Activated B cell treated with CpG ODN at 0.5 μM for 24 hours (primary cell): ENCODE measurements at regions of chr16 and their contacts with region 1.

Region 1: GRCh38 chr16:25014500-25015147 is 545 bp downstream of the ARHGAP17 start:
- DNase-seq: peak; percentile 35
- ATAC-seq: peak; percentile 14
- H3K4me3 Mint-ChIP-seq: peak overlapping the region; percentile 92
- H3K27ac Mint-ChIP-seq: peak overlapping the region; percentile 85
- H3K4me1 Mint-ChIP-seq: peaks cover 86% of the 10 kb centered on the region
- H3K27me3 Mint-ChIP-seq: no peaks in the 10 kb centered on the region
- CTCF ChIP-seq: no peak

Region 2: DNA sequence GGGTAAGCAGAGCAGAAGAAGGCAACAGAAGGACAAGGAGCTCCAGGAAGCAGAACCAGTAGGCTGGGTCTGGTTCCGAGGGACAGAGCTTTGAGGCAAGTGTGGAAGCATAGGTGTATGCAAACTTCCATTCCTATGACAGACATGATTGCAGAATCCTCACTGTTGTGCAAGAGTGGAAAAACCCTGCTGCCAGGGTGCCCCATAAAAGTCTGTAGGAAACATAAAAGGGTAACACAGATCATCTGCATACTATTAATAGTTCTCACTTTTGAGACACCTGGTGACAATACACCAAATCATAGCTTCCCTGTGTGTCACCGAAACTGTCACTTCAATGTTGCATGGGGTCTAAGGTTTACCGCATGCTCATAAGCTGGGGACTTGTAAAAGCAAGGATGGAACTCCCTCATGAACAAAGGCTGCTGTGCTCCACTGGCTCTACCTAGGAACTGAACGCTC is 39.2 kb before region 1 on chr16:
- CTCF ChIA-PET with region 1: interaction called, 4 read pairs
- POLR2A ChIA-PET with region 1: interaction called, 21 read pairs
- intact Hi-C with region 1: loop called (anchors 1 kb)
- DNase-seq: no peak
- ATAC-seq: peak; percentile 62
- H3K4me3 Mint-ChIP-seq: peak overlapping the region; percentile 12
- H3K27ac Mint-ChIP-seq: peak overlapping the region; percentile 96
- H3K4me1 Mint-ChIP-seq: peaks cover 83% of the 10 kb centered on the region
- H3K27me3 Mint-ChIP-seq: no peaks in the 10 kb centered on the region
- CTCF ChIP-seq: no peak

Region 3: GRCh38 chr16:25031441-25032307 is 17.1 kb after region 1 on chr16:
- CTCF ChIA-PET with region 1: interaction called, 3 read pairs
- POLR2A ChIA-PET with region 1: interaction called, 72 read pairs
- intact Hi-C with region 1: loop called (anchors 1 kb)
- DNase-seq: peak; percentile 69
- ATAC-seq: peak; percentile 95
- H3K4me3 Mint-ChIP-seq: peak overlapping the region; percentile 95
- H3K27ac Mint-ChIP-seq: peak overlapping the region; percentile 90
- H3K4me1 Mint-ChIP-seq: peaks cover 50% of the 10 kb centered on the region
- H3K27me3 Mint-ChIP-seq: no peaks in the 10 kb centered on the region
- CTCF ChIP-seq: no peak

Region 4: DNA sequence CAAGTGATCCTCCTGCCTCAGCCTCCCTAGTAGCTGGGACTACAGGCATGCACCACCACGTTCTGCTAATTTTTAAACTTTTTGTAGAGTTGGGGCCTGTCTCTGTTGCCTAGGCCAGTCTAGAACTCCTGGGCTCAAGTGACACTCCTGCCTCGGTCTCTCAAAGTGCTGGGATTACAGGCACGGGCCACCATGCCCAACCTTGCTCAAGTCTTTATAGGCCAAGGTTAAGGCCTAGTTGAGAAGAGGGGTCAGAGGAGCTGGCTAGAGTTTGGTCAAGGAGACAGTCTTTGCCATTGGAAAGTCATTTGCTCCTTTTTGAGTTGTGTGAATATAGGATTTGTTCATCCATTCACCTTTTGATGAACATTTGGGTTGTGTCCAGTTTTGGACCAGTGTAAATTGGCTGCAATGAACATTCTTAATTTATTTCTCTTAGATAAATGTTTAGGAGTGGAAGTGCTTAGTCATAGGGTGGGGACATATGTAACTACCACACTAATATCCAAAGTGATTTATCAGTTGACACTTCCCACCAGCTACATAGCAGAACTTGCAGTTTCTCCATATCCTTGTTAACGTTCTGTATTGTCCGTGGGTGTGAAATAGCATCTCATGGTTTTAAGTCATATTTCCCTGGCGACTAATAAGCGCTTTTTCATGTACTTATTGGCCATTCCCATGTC is 31.2 kb after region 1 on chr16:
- CTCF ChIA-PET with region 1: interaction called, 4 read pairs
- POLR2A ChIA-PET with region 1: interaction called, 80 read pairs
- intact Hi-C with region 1: loop called (anchors 1 kb)
- DNase-seq: no peak
- ATAC-seq: no peak
- H3K4me3 Mint-ChIP-seq: no peak overlapping the region
- H3K27ac Mint-ChIP-seq: no peak overlapping the region
- H3K4me1 Mint-ChIP-seq: peaks cover 62% of the 10 kb centered on the region
- H3K27me3 Mint-ChIP-seq: no peaks in the 10 kb centered on the region
- CTCF ChIP-seq: no peak

Region 5: DNA sequence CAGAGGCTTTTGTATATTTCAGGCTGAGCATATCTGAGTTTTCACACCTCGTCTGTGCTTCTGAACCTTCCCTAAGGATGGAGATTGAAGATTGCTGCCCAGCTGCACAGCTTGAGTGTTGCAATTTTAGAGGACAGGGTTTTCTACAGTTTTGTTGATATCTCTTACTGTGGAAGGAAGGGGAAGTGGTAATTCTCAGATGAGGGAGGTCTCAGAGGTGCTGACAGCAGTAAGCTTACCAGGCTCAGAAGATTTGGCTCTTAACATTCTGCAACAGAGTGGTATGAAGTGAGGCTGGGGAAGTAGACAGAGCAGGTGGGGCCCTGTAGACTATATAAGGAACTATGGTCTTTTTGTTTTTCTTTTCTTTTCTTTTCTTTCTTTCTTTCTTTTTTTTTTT is 46.3 kb after region 1 on chr16:
- CTCF ChIA-PET with region 1: interaction called, 5 read pairs
- POLR2A ChIA-PET with region 1: interaction called, 12 read pairs
- intact Hi-C with region 1: no loop called
- DNase-seq: no peak
- ATAC-seq: peak; percentile 95
- H3K4me3 Mint-ChIP-seq: peak overlapping the region; percentile 41
- H3K27ac Mint-ChIP-seq: peak overlapping the region; percentile 92
- H3K4me1 Mint-ChIP-seq: peaks cover 49% of the 10 kb centered on the region
- H3K27me3 Mint-ChIP-seq: no peaks in the 10 kb centered on the region
- CTCF ChIP-seq: no peak